ENCODE measurements at regions of chr1 and their contacts with region 1.

Region 1: GRCh38 chr1:234040446-234041306 is 136.2 kb downstream of the SLC35F3 start:
- DNase-seq: no peak
- H3K4me3 ChIP-seq: no peak overlapping the region
- H3K27ac ChIP-seq: no peak overlapping the region
- H3K4me1 ChIP-seq: no peaks in the 10 kb centered on the region
- H3K27me3 ChIP-seq: no peaks in the 10 kb centered on the region
- CTCF ChIP-seq: no peak
- EP300 ChIP-seq: no peak
- POLR2A ChIP-seq: no peak

Region 2: GRCh38 chr1:233496993-233497392 is 543.7 kb before region 1 on chr1:
- in situ Hi-C with region 1: no loop called
- intact Hi-C with region 1: no loop called
- DNase-seq: no peak
- H3K4me3 ChIP-seq: no peak overlapping the region
- H3K27ac ChIP-seq: no peak overlapping the region
- H3K4me1 ChIP-seq: no peaks in the 10 kb centered on the region
- H3K27me3 ChIP-seq: no peaks in the 10 kb centered on the region
- CTCF ChIP-seq: no peak
- EP300 ChIP-seq: no peak
- POLR2A ChIP-seq: no peak

Region 3: DNA sequence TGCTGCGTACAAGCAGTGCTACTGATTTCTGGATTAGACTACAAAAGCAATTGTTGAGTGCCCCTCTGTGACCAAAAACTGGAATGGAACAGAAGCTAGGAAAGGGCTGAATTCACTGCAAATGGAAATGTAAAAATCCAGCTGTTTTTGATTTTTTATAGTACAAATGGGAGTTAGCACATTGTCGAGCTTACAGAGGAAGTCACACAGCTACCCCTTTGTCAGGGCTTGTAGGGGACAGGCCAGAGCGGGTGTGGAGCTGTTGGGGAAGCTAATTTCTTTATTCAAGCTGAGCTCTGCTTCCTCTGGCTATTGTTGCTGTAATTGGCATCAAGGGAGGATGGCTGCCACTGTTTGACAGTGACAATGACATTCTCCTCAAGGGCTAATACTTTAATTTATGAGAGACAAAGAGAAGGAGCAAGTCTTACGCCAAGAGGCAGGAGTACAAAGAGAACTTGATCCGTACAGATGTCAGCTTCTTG is 40.1 kb before region 1 on chr1:
- in situ Hi-C with region 1: no loop called
- intact Hi-C with region 1: loop called (anchors 1 kb)
- DNase-seq: no peak
- H3K4me3 ChIP-seq: no peak overlapping the region
- H3K27ac ChIP-seq: no peak overlapping the region
- H3K4me1 ChIP-seq: no peaks in the 10 kb centered on the region
- H3K27me3 ChIP-seq: no peaks in the 10 kb centered on the region
- CTCF ChIP-seq: no peak
- EP300 ChIP-seq: no peak
- POLR2A ChIP-seq: no peak

Region 4: GRCh38 chr1:234170622-234171021 is 129.9 kb after region 1 on chr1:
- in situ Hi-C with region 1: no loop called
- intact Hi-C with region 1: no loop called
- DNase-seq: no peak
- H3K4me3 ChIP-seq: no peak overlapping the region
- H3K27ac ChIP-seq: no peak overlapping the region
- H3K4me1 ChIP-seq: no peaks in the 10 kb centered on the region
- H3K27me3 ChIP-seq: no peaks in the 10 kb centered on the region
- CTCF ChIP-seq: no peak
- EP300 ChIP-seq: no peak
- POLR2A ChIP-seq: no peak

Measured in transverse colon (tissue), 4 donors.